CD4-positive, alpha-beta T cell (primary cell): ENCODE measurements at regions of chr3 and their contacts with region 1.

Region 1: GRCh38 chr3:52444860-52445793 is at the start of gene SEMA3G:
- DNase-seq: peak; percentile 55 to 86 (median 70)
- ATAC-seq: peak; percentile 96
- H3K4me3 ChIP-seq: peak within 1 kb of the TSS; percentile 29
- H3K4me3 Mint-ChIP-seq: no peak within 1 kb of the TSS
- H3K27ac ChIP-seq: no peak within 1 kb of the TSS
- H3K27ac Mint-ChIP-seq: no peak within 1 kb of the TSS
- H3K4me1 ChIP-seq: peaks cover 28% of the 10 kb centered on the region
- H3K4me1 Mint-ChIP-seq: peaks cover 14% of the 10 kb centered on the region
- H3K27me3 ChIP-seq: no peaks in the 10 kb centered on the region
- H3K27me3 Mint-ChIP-seq: no peaks in the 10 kb centered on the region
- CTCF ChIP-seq: peak; percentile 32
- total RNA-seq, gene SEMA3G: 0.34 to 0.69 TPM

Region 2: GRCh38 chr3:52346623-52347530 is 98.2 kb before region 1 on chr3:
- CTCF ChIA-PET with region 1: no interaction called
- POLR2A ChIA-PET with region 1: no interaction called
- intact Hi-C with region 1: no loop called
- DNase-seq: no peak
- ATAC-seq: no peak
- H3K4me3 ChIP-seq: no peak overlapping the region
- H3K4me3 Mint-ChIP-seq: no peak overlapping the region
- H3K27ac ChIP-seq: no peak overlapping the region
- H3K27ac Mint-ChIP-seq: peak overlapping the region; percentile 25
- H3K4me1 ChIP-seq: no peaks in the 10 kb centered on the region
- H3K4me1 Mint-ChIP-seq: no peaks in the 10 kb centered on the region
- H3K27me3 ChIP-seq: no peaks in the 10 kb centered on the region
- H3K27me3 Mint-ChIP-seq: no peaks in the 10 kb centered on the region
- CTCF ChIP-seq: no peak

Region 3: GRCh38 chr3:52428151-52429005 is 16.7 kb before region 1 on chr3:
- CTCF ChIA-PET with region 1: interaction called, 5 read pairs
- POLR2A ChIA-PET with region 1: no interaction called
- intact Hi-C with region 1: loop called (anchors 1 to 2 kb)
- DNase-seq: peak in 5 of 14 experiments; percentile 15 to 69 (median 55)
- ATAC-seq: peak; percentile 75
- H3K4me3 ChIP-seq: no peak overlapping the region
- H3K4me3 Mint-ChIP-seq: no peak overlapping the region
- H3K27ac ChIP-seq: no peak overlapping the region
- H3K27ac Mint-ChIP-seq: no peak overlapping the region
- H3K4me1 ChIP-seq: peaks cover under 1% of the 10 kb centered on the region
- H3K4me1 Mint-ChIP-seq: no peaks in the 10 kb centered on the region
- H3K27me3 ChIP-seq: no peaks in the 10 kb centered on the region
- H3K27me3 Mint-ChIP-seq: no peaks in the 10 kb centered on the region
- CTCF ChIP-seq: peak; percentile 67